ENCODE measurements at regions of chr16 and their contacts with region 1.

Region 1: GRCh38 chr16:58409316-58409973 is 17.2 kb downstream of the GINS3 start:
- DNase-seq: peak; percentile 82
- ATAC-seq: peak; percentile 96
- H3K4me3 ChIP-seq: peak overlapping the region; percentile 38
- H3K27ac ChIP-seq: peak overlapping the region; percentile 82
- H3K4me1 ChIP-seq: peaks cover 24% of the 10 kb centered on the region
- H3K27me3 ChIP-seq: no peaks in the 10 kb centered on the region
- CTCF ChIP-seq: no peak

Region 2: DNA sequence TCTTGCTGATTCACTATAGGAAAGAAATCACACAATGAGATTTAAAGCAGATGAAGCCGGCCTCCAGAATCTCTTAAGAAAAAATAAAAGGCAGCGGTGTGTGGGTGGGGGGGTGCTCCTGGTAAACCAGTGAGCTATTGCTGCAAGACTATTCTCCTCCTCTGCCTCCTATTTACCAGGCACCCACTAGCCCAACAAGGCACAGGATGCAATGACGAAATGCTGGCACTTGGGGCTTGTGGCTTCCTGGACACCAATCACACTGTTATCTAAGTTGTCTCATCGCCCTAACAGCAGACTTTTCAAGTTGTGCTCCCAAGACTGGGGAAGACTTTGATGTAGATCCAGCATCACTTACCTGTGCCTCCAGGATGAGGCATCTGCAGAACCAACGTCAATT is 40.3 kb after region 1 on chr16:
- CTCF ChIA-PET with region 1: interaction called, 5 read pairs
- POLR2A ChIA-PET with region 1: interaction called, 7 read pairs
- intact Hi-C with region 1: loop called (anchors 5 kb)
- DNase-seq: no peak
- ATAC-seq: no peak
- H3K4me3 ChIP-seq: no peak overlapping the region
- H3K27ac ChIP-seq: no peak overlapping the region
- H3K4me1 ChIP-seq: peaks cover 22% of the 10 kb centered on the region
- H3K27me3 ChIP-seq: no peaks in the 10 kb centered on the region
- CTCF ChIP-seq: no peak